ENCODE measurements at regions of chr12 and their contacts with region 1.

Region 1: DNA sequence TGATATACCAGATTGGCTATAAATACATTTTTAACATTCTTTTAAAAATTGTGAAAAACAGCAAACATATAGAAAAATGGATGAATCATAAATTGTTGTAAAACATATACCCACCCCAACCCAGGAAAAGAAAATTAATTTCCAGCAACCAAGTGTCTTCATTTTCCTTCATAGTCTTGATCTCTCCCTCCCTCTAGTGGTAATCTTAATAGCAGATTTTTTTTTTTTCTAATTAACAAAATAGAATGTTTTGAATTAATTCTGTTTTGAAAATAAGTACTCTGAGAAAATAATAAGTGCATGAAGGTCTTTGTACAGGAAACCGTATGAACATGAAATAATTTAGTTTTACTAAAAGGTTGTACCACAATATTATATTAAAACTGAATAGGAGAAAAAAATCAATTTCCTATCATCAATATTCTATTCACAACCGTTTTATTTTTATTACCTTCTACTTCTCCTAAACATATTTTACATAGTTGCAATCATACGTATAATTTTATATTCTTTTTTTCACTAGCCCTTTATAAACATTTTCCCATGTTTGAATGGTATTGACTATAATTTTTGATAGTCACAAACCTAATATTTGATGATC is 7.0 kb downstream of the ETNK1 start:
- DNase-seq: no peak
- H3K4me3 Mint-ChIP-seq: no peak overlapping the region
- H3K27ac Mint-ChIP-seq: no peak overlapping the region
- H3K4me1 Mint-ChIP-seq: peaks cover 41% of the 10 kb centered on the region
- H3K27me3 Mint-ChIP-seq: no peaks in the 10 kb centered on the region

Region 2: GRCh38 chr12:22459838-22460490 is 172.0 kb before region 1 on chr12:
- intact Hi-C with region 1: loop called (anchors 5 kb)
- DNase-seq: peak; percentile 73
- H3K4me3 Mint-ChIP-seq: no peak overlapping the region
- H3K27ac Mint-ChIP-seq: no peak overlapping the region
- H3K4me1 Mint-ChIP-seq: no peaks in the 10 kb centered on the region
- H3K27me3 Mint-ChIP-seq: no peaks in the 10 kb centered on the region

Region 3: GRCh38 chr12:22529281-22530060 is 102.5 kb before region 1 on chr12:
- intact Hi-C with region 1: loop called (anchors 1 kb)
- DNase-seq: no peak
- H3K4me3 Mint-ChIP-seq: no peak overlapping the region
- H3K27ac Mint-ChIP-seq: peak overlapping the region; percentile 66
- H3K4me1 Mint-ChIP-seq: peaks cover 7% of the 10 kb centered on the region
- H3K27me3 Mint-ChIP-seq: no peaks in the 10 kb centered on the region

Region 4: GRCh38 chr12:22759769-22760674 is 128.1 kb after region 1 on chr12:
- intact Hi-C with region 1: no loop called
- DNase-seq: no peak
- H3K4me3 Mint-ChIP-seq: no peak overlapping the region
- H3K27ac Mint-ChIP-seq: no peak overlapping the region
- H3K4me1 Mint-ChIP-seq: no peaks in the 10 kb centered on the region
- H3K27me3 Mint-ChIP-seq: no peaks in the 10 kb centered on the region

Region 5: DNA sequence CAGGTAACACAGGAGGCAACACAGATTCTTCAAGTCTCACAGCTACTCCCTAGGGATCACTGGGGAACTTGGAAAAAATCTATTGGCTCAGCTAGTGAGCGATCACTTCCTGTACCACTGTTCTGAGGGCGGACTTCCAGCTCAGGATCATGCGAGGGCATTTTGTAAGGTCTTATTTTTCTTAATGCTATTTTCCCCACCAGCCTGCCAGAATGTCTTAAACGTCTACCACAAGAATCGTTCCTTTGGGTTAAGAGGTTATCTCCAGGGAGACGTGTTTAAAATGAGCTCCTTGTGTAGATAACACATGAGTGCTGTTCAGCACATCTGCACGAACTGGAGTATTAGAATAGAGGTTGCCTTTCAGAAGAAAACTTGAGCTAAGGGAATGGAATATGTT is 155.6 kb after region 1 on chr12:
- intact Hi-C with region 1: no loop called
- DNase-seq: no peak
- H3K4me3 Mint-ChIP-seq: no peak overlapping the region
- H3K27ac Mint-ChIP-seq: no peak overlapping the region
- H3K4me1 Mint-ChIP-seq: no peaks in the 10 kb centered on the region
- H3K27me3 Mint-ChIP-seq: peaks cover 1% of the 10 kb centered on the region

Region 6: GRCh38 chr12:22803725-22804124 is 171.8 kb after region 1 on chr12:
- intact Hi-C with region 1: no loop called
- DNase-seq: no peak
- H3K4me3 Mint-ChIP-seq: no peak overlapping the region
- H3K27ac Mint-ChIP-seq: no peak overlapping the region
- H3K4me1 Mint-ChIP-seq: no peaks in the 10 kb centered on the region
- H3K27me3 Mint-ChIP-seq: no peaks in the 10 kb centered on the region